Activated naive CD4-positive, alpha-beta T cell treated with anti-CD3 and anti-CD28 coated beads for 36 hours (primary cell): ENCODE measurements at regions of chr1 and their contacts with region 1.

Region 1: DNA sequence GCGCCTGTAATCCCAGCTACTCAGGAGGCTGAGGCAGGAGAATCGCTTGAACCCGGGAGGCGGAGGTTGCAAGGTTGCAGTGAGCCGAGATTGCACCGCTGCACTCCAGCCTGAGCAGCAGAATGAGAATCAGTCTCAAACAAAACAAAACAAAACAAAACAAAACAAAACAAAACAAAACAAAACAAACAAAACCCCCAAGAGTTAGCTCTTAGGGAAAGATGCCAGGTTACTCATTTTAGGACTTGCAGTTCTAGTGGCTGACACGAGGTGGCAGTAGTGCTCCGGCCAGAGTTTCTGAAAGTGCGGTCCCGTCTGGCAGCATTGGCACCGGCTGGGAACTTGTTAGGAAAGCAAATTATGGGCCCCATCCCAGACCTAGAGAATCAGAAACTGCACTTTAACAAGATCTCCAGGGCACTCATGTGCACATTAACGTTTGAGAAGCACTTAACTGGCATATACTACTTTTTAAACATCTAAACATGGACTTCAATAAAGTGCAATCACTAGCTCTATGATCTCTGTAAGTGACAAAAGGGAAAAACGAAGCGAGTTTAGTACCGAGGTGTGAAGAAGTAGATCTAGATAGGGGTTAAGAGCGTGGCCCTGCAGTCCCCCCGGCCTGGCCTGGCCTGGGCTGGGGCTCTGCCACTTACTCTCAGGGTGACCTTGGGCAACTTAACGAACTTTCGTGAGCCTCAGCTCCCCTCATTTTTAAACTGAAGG is 41.9 kb upstream of the TNFRSF1B start:
- DNase-seq: peak; percentile 88
- H3K4me3 Mint-ChIP-seq: no peak overlapping the region
- H3K27ac Mint-ChIP-seq: no peak overlapping the region
- H3K4me1 Mint-ChIP-seq: peaks cover 44% of the 10 kb centered on the region
- H3K27me3 Mint-ChIP-seq: no peaks in the 10 kb centered on the region

Region 2: GRCh38 chr1:12153181-12153785 is 28.4 kb after region 1 on chr1:
- CTCF ChIA-PET with region 1: interaction called, 16 read pairs
- intact Hi-C with region 1: loop called (anchors 2 kb)
- DNase-seq: peak; percentile 67
- H3K4me3 Mint-ChIP-seq: no peak overlapping the region
- H3K27ac Mint-ChIP-seq: peak overlapping the region; percentile 89
- H3K4me1 Mint-ChIP-seq: peaks cover 83% of the 10 kb centered on the region
- H3K27me3 Mint-ChIP-seq: no peaks in the 10 kb centered on the region

Region 3: GRCh38 chr1:12177999-12178441 is 53.2 kb after region 1 on chr1:
- CTCF ChIA-PET with region 1: interaction called, 33 read pairs
- intact Hi-C with region 1: loop called (anchors 1 kb)
- DNase-seq: peak; percentile 96
- H3K4me3 Mint-ChIP-seq: peak overlapping the region; percentile 69
- H3K27ac Mint-ChIP-seq: peak overlapping the region; percentile 90
- H3K4me1 Mint-ChIP-seq: peaks cover 88% of the 10 kb centered on the region
- H3K27me3 Mint-ChIP-seq: no peaks in the 10 kb centered on the region

Region 4: GRCh38 chr1:12208764-12209494 is 84.1 kb after region 1 on chr1:
- CTCF ChIA-PET with region 1: interaction called, 301 read pairs
- intact Hi-C with region 1: loop called (anchors 1 kb)
- DNase-seq: peak; percentile 95
- H3K4me3 Mint-ChIP-seq: no peak overlapping the region
- H3K27ac Mint-ChIP-seq: peak overlapping the region; percentile 37
- H3K4me1 Mint-ChIP-seq: peaks cover 42% of the 10 kb centered on the region
- H3K27me3 Mint-ChIP-seq: no peaks in the 10 kb centered on the region

Region 5: DNA sequence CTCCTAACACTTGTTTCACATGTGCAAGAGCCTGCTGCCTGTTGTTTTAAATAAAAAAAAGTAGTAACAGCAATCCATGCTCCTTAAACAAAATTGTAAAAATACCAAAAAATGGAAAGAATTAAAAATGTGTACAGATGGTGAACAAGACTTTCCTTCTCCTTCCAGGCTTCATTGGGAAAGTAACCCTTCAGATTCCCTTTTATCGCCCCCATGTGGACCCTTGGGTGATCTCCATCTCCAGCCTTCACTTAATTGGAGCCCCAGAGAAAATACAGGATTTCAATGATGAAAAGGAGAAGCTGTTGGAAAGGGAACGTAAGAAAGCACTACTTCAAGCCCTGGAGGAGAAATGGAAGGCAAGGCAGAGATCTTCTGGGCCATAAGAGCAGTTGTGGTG is 119.2 kb after region 1 on chr1:
- CTCF ChIA-PET with region 1: interaction called, 37 read pairs
- intact Hi-C with region 1: loop called (anchors 1 kb)
- DNase-seq: peak; percentile 24
- H3K4me3 Mint-ChIP-seq: no peak overlapping the region
- H3K27ac Mint-ChIP-seq: no peak overlapping the region
- H3K4me1 Mint-ChIP-seq: peaks cover 2% of the 10 kb centered on the region
- H3K27me3 Mint-ChIP-seq: no peaks in the 10 kb centered on the region

Region 6: DNA sequence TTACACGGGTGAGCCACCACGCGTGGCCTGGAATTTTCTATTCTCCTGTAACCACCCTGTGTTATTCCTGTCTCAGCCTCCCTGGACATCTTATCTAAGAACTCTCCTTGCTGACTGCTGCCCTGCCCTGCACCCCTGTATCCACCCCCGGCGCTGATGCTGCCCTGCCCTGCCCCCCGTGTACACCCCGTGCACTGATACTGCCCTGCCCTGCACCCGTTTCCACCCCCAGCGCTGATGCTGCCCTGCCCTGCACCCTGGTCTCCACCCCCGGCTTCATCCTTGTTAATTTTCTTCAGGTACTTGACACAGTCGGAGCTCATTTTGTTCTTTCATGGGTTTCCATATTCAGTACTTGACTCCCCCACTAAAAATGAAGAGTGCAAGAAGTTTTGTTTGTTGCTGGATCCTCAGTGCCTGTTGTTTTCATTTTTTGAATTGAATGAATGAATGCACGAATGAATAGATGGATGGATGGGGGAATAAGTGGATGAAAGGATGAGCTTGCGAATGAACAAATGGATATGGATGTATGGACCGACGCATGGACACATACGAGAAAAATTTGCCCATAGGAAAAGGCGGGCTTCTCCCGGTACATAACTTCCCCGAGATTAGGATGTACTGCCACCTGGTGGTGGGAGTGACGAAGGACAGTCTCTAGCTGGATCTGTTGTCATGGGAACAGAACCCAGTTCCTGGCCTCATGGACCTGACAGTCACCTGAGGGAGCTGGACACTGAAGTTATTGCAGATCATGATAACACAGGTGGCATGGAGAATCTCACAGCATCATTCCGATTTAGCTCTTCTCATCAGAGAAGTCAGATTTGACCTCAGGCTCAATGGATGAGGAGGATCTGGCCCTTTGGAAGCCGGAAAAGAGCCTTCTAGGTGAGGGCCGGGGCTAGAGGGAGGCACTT is 533.9 kb after region 1 on chr1:
- CTCF ChIA-PET with region 1: interaction called, 4 read pairs
- intact Hi-C with region 1: loop called (anchors 10 kb)
- DNase-seq: peak; percentile 83
- H3K4me3 Mint-ChIP-seq: peak overlapping the region; percentile 28
- H3K27ac Mint-ChIP-seq: no peak overlapping the region
- H3K4me1 Mint-ChIP-seq: peaks cover 4% of the 10 kb centered on the region
- H3K27me3 Mint-ChIP-seq: peaks cover 2% of the 10 kb centered on the region